Aorta (tissue), 5 donors: ENCODE measurements at regions of chr10 and their contacts with region 1.

Region 1: DNA sequence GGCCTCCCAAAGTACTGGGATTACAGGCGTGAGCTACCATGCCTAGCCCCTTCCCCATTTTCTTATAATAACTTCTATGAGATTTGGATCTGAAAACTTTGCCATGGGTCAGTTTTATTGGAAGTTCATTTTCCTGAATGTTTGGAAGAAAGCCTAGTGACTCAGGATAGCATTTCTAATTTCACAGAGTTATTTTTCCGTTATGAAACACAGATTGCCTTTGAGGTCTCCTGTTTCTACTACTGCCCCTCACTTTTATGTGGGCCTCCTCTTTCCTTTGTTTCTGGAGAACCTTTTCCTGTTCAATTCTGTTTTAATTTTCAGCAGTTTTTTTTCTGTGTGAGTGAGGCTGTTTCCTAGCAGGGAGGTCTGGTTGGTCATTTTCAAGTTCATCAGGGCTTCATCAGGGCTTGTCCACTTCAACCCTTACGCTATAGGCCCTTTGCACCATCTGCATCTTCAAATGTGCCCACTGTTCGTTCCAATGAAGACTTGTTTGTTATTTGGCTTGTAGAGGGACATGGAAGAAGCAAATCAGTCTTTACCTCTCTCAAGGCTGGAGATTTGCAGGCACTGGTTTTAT is 58.7 kb downstream of the BMPR1A start:
- DNase-seq: no peak
- ATAC-seq: peak; percentile 62
- H3K4me3 ChIP-seq: no peak overlapping the region
- H3K27ac ChIP-seq: peak overlapping the region; percentile 59 to 95
- H3K4me1 ChIP-seq: peaks cover 8 to 10% of the 10 kb centered on the region in 2 donors
- H3K27me3 ChIP-seq: no peaks in the 10 kb centered on the region

Region 2: GRCh38 chr10:86742230-86742629 is 72.9 kb before region 1 on chr10:
- intact Hi-C with region 1: loop called in 1 of 2 experiments (anchors 2 kb)
- DNase-seq: no peak
- ATAC-seq: no peak
- H3K4me3 ChIP-seq: no peak overlapping the region
- H3K27ac ChIP-seq: peak overlapping the region in 1 of 2 donors; percentile 42
- H3K4me1 ChIP-seq: peaks cover 3 to 4% of the 10 kb centered on the region in 2 donors
- H3K27me3 ChIP-seq: no peaks in the 10 kb centered on the region